ENCODE measurements at regions of chrX and their contacts with region 1.

Region 1: DNA sequence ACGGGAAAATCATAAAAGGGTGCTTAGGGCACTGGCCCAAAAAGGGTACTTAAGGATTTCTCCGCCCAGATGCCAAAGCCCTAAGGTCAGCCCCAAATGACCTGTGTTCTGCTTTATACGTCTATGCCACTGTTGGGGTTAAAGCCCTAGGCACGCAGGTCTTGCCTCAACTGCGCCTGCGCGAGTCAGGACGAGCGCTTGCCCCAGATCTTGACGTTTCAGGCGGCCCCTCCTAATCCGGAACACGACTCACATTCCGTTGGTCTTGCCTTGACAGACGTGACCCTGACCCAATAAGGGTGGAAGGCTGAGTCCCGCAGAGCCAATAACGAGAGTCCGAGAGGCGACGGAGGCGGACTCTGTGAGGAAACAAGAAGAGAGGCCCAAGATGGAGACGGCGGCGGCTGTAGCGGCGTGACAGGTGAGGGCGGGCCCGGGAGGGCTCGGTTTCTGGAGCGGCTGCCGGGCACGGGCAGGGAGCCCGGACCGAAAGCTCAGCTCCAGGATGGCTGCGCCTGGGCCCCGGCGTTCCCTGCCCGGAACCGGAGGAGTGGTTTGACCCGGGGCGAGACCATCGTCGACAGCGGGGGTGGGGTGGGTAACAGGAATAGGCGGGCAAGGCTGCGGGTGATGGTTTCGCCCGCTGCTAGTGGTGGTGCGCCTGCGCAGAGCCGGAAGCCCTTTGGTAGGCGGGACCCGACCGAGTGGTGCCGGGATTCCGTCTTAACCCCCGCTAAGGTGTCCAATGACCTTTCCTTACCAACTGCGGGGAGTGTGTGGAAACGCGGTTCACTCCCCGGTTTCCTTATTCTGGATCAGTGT is at the start of gene ARAF:
- DNase-seq: peak; percentile 98
- H3K4me3 Mint-ChIP-seq: peak within 1 kb of the TSS; percentile 81
- H3K27ac Mint-ChIP-seq: peak within 1 kb of the TSS; percentile 96
- H3K4me1 Mint-ChIP-seq: peaks cover 35% of the 10 kb centered on the region
- H3K27me3 Mint-ChIP-seq: no peaks in the 10 kb centered on the region
- total RNA-seq, gene ARAF: 65.9 to 71.5 TPM

Region 2: DNA sequence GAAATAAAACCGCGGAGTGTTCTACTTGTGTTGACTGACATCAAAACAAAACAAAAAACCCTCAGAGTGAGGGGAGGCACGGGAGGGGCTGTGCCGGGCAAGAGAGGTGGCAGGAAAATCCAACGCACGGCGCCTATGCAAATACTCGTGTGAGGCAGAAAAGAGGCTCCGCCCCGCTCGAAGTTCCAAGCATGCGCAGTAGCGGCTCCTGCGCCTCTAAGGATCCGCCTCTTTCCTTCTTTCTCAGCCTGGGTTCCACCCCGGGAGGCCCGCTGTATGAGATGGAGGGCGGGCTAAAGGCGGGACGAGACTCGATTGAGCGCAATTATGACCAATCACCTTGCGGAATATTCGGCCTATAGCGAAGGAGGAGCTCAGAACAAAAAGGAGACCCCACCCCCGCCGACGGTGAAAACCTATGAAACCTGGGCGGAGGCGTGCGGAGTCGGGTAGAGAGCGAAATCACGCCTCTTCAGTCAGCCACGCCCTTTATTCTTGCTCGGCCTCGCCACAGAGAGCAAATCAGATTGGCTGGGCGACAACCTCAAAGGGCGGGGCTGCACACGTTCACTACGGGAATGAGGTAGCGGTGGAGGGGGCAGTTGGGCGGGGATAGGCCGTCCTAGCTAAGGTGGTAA is 343.3 kb before region 1 on chrX:
- CTCF ChIA-PET with region 1: no interaction called
- intact Hi-C with region 1: loop called (anchors 1 kb)
- DNase-seq: peak; percentile 98
- H3K4me3 Mint-ChIP-seq: peak overlapping the region; percentile 80
- H3K27ac Mint-ChIP-seq: peak overlapping the region; percentile 98
- H3K4me1 Mint-ChIP-seq: peaks cover 37% of the 10 kb centered on the region
- H3K27me3 Mint-ChIP-seq: no peaks in the 10 kb centered on the region

Region 3: DNA sequence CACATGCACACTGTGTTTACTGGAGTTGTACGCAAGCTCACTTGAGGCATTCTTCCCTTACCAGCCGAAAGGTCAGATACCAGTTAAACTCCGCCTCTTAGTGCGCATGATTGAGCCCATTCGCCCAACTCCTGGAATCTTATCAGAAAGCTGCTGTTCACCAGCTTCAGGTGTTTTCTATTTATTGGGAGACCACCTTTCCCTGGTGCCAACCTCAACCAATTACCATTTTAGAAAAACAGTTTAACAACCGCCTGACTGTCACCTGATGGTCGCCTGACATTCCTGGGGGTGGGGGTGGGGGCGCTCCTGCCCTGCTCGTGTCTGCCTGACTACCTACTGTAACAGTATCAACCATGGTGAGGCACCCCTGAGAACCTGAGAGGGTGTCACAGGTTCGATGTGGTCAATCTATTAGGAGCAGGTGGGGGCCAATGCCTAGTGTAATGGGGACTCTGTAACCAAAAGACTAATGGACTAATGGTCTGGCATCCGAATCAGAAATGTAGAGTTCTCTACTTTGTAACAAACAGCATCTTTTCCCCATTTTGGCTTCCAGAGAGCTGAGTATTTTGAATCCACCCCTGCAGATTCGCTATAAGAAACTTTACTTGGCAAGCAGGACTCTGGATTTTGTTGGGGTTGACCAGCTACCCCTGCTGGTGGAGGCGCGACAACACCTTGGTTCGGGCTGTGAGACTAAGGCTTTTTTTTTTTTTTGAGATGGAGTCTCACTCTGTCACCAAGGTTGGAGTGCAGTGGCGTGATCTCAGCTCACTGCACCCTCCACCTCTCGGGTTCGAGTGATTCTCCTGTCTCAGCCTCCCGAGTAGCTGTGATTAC is 248.9 kb before region 1 on chrX:
- CTCF ChIA-PET with region 1: no interaction called
- intact Hi-C with region 1: no loop called
- DNase-seq: peak; percentile 69
- H3K4me3 Mint-ChIP-seq: no peak overlapping the region
- H3K27ac Mint-ChIP-seq: no peak overlapping the region
- H3K4me1 Mint-ChIP-seq: peaks cover 3% of the 10 kb centered on the region
- H3K27me3 Mint-ChIP-seq: no peaks in the 10 kb centered on the region

Region 4: DNA sequence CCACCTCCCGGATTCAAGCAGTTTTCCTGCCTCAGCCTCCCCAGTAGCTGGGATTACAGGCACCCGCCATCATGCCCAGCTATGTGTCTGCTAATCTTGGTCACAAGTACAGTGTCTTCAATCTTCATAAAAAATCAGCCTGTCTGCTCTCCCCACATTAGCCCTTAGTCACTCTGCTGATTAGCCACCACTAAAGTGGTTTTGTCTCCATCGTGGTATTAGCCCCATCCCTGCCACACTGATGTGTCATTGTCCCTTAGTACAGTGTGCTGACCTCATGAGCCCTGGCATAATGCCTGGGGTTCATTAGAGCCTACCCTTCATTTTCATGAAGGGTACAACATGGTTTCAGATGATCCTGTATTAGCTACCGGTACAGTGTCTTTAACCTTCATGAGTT is 140.8 kb before region 1 on chrX:
- CTCF ChIA-PET with region 1: no interaction called
- intact Hi-C with region 1: no loop called
- DNase-seq: no peak
- H3K4me3 Mint-ChIP-seq: no peak overlapping the region
- H3K27ac Mint-ChIP-seq: no peak overlapping the region
- H3K4me1 Mint-ChIP-seq: no peaks in the 10 kb centered on the region
- H3K27me3 Mint-ChIP-seq: no peaks in the 10 kb centered on the region

Region 5: DNA sequence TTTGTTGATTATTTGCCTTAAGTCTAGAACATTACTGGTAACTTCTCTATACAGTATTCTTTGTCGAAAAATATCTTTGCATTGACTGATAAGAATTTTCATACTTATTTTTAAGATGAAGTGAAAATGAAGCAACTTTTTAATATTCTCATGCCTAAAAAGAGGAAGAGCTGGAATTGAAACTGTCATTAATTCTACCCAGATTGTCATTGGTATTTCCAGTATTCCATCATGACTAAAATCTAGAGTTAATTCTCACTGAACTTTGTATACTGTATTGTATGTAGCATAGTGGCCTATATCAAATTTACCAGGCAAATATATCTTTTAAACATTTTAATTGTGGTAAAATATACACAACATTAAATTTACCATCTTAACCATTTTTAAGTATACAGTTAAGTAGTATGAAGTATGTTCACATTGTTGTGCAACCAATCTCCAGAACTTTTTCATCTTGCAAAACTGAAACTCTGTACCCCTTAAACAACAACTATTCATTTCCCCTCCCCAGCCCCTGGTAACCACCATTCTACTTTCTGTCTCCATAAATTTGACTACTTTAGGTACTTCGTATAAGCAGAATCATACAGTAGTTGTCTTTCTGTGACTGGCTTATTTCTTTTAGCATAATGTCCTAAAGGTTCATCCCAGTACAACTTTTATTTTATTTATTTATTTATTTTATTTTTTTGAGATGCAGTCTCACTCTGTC is 53.7 kb before region 1 on chrX:
- CTCF ChIA-PET with region 1: no interaction called
- intact Hi-C with region 1: no loop called
- DNase-seq: no peak
- H3K4me3 Mint-ChIP-seq: no peak overlapping the region
- H3K27ac Mint-ChIP-seq: no peak overlapping the region
- H3K4me1 Mint-ChIP-seq: peaks cover 4% of the 10 kb centered on the region
- H3K27me3 Mint-ChIP-seq: no peaks in the 10 kb centered on the region

Region 6: GRCh38 chrX:47628980-47629379 is 67.9 kb after region 1 on chrX:
- CTCF ChIA-PET with region 1: interaction called, 3 read pairs
- intact Hi-C with region 1: loop called (anchors 2 kb)
- DNase-seq: peak; percentile 41
- H3K4me3 Mint-ChIP-seq: peak overlapping the region; percentile 67
- H3K27ac Mint-ChIP-seq: peak overlapping the region; percentile 89
- H3K4me1 Mint-ChIP-seq: peaks cover 25% of the 10 kb centered on the region
- H3K27me3 Mint-ChIP-seq: no peaks in the 10 kb centered on the region

Region 7: GRCh38 chrX:47650164-47651042 is 89.4 kb after region 1 on chrX and contains the start of gene ELK1:
- CTCF ChIA-PET with region 1: no interaction called
- intact Hi-C with region 1: loop called (anchors 2 kb)
- DNase-seq: peak; percentile 93
- H3K4me3 Mint-ChIP-seq: peak within 1 kb of the TSS; percentile 88
- H3K27ac Mint-ChIP-seq: peak within 1 kb of the TSS; percentile 91
- H3K4me1 Mint-ChIP-seq: peaks cover 37% of the 10 kb centered on the region
- H3K27me3 Mint-ChIP-seq: no peaks in the 10 kb centered on the region
- total RNA-seq, gene ELK1: 58.1 to 58.8 TPM

Region 8: DNA sequence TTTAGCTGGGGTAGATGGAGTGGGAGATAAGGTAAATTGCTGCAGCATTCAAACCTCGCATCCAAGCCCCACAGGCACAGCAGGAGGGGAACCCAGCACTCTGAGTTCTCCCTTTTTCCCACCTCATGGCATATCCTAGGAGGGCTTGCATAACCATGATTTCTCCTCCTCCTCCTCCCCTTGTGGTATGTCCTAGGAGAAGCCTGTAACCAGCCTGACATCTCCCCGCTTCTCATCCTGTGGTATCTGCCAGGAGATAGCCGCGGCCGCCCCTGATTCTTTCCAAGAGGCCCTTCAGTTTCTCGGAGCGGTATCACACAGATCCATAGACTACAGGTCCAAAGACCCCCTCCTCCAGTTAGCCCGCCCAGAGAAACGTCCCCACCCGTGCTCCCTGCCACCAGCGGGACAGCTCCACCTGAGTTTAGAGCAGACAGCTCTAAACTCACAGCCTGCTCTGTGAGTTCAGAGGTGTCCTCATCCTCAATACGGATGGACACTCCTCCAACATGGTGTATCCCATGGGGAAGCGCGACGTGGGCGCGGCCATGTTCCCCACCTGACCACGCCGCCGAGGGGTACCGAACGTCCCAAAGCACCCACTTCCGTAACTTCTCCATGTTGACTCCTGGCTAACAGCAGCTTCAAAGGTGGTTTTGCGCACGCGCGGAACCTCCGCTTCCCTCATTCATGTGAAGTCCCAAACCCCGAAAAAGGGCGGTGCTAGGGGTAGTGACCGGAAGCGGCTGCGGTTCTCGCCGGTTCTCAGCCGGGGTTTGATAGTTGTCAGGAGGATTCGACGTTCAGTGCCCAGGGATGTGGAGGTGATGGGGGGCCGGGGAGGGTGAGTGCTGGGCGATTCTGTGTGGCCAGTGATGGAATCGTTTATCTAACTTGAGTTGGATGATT is 275.4 kb after region 1 on chrX and contains the start of gene ZNF81:
- CTCF ChIA-PET with region 1: no interaction called
- intact Hi-C with region 1: loop called (anchors 2 kb)
- DNase-seq: peak; percentile 94
- H3K4me3 Mint-ChIP-seq: peak within 1 kb of the TSS; percentile 81
- H3K27ac Mint-ChIP-seq: peak within 1 kb of the TSS; percentile 96
- H3K4me1 Mint-ChIP-seq: peaks cover 18% of the 10 kb centered on the region
- H3K27me3 Mint-ChIP-seq: no peaks in the 10 kb centered on the region
- total RNA-seq, gene ZNF81: 5.8 to 7.2 TPM

Region 9: DNA sequence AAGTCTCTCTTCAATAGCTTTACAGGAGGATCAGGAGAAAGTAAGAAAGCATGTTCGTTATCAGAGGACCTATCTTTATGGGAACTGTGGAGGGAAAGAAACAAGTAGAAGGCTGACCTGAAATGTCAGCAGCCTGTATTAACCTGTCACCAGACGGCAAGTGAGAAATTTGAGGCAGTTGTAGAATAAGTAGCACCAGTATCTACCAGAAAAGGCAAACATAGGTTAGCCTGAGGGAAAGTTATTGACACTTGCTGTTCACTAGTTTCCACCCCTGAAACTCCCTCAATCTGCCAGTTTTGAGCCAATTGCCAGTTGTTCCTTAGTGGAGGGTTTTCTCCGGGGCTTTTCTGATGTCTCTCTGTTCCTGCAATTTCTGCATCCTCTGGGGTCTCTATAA is 312.1 kb after region 1 on chrX:
- CTCF ChIA-PET with region 1: no interaction called
- intact Hi-C with region 1: no loop called
- DNase-seq: no peak
- H3K4me3 Mint-ChIP-seq: no peak overlapping the region
- H3K27ac Mint-ChIP-seq: no peak overlapping the region
- H3K4me1 Mint-ChIP-seq: no peaks in the 10 kb centered on the region
- H3K27me3 Mint-ChIP-seq: no peaks in the 10 kb centered on the region